Head of caudate nucleus (tissue), 42 donors: ENCODE measurements at regions of chr3 and their contacts with region 1.

Region 1: GRCh38 chr3:188954590-188955208 is 217.1 kb upstream of the TPRG1 start:
- DNase-seq: peak; percentile 64 to 97 (median 90)

Region 2: DNA sequence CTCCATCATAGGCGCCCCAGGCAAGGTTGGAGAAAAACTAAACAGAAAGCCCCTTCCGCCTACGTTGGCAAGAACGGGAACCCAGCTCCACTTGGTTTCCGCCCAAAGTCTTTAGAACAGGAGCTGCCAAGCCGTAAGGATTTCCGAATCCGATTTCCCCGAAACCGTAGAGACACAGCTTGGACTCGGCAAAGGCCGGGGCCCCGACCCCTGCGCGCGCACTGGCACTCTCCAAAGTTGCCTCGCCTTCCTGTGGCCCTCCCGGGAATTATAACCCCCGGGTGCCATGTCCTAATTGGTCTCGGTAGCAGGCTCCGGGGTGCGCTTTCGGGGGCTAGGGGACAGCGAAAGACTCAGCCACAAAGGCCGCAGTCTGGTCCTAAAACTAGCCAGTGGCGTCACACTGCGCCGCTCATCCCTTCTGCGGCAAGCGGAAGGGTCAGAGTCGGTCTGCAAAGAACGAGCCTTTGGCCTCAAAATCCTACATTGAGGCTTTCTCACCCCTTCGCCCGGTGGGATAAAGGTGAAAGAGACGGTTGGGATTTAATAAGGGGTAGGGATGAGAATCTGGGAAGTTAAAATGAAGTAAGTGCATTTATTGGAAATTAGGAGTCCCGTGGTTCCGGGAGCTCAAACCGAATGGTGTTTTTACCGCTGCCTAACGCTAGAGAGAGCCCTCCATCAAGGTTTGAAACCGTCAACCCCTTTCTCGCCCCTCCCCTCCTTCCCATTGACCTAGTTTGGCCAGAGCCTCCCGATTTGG is 1216.2 kb before region 1 on chr3:
- intact Hi-C with region 1: loop called (anchors 2 kb)
- DNase-seq: peak; percentile 73 to 97 (median 90)